ENCODE measurements at regions of chr3 and their contacts with region 1.

Region 1: DNA sequence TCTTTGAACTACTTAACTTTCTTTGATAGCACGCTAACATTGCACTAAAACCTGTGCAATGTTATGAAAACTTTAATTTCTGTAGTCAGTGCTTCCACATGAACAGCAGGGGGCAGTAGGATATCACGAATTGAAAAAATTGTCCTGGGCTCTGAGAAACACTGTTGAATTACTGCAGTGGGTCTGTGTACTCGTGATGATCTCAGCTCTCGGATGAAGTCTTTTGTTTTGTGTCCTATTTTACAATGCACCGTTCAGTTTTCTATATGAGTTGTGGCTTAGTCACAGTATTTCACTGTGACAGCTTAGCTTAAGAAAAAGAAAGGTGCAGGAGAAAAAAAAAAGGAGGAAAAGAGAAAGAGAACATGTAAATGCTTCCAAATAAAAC is 141.3 kb upstream of the CCDC54 start:
- DNase-seq: peak; percentile 50 to 69 (median 58)
- ATAC-seq: peak; percentile 81
- H3K4me3 ChIP-seq: peak overlapping the region; percentile 24; the same call in 1 of the 2 replicates
- H3K27ac ChIP-seq: no peak overlapping the region
- H3K4me1 ChIP-seq: peaks cover 0 to 7% of the 10 kb centered on the region in 2 experiments; a peak in 3 of 5 replicates
- H3K27me3 ChIP-seq: no peaks in the 10 kb centered on the region
- CTCF ChIP-seq: peak; percentile 57 to 83 (median 65); a peak in 5 of 6 replicates
- EP300 ChIP-seq: no peak
- POLR2A ChIP-seq: no peak
- RAD21 ChIP-seq: peak; percentile 85

Region 2: GRCh38 chr3:107184375-107184774 is 51.5 kb before region 1 on chr3:
- CTCF ChIA-PET with region 1: no interaction called
- POLR2A ChIA-PET with region 1: no interaction called
- in situ Hi-C with region 1: no loop called
- intact Hi-C with region 1: no loop called
- DNase-seq: no peak
- ATAC-seq: no peak
- H3K4me3 ChIP-seq: no peak overlapping the region
- H3K27ac ChIP-seq: no peak overlapping the region
- H3K4me1 ChIP-seq: no peaks in the 10 kb centered on the region
- H3K27me3 ChIP-seq: no peaks in the 10 kb centered on the region
- CTCF ChIP-seq: no peak
- EP300 ChIP-seq: no peak
- POLR2A ChIP-seq: no peak
- RAD21 ChIP-seq: no peak

Region 3: GRCh38 chr3:107421170-107421792 is 185.4 kb after region 1 on chr3:
- CTCF ChIA-PET with region 1: interaction called, 3 read pairs
- POLR2A ChIA-PET with region 1: interaction called, 4 read pairs
- in situ Hi-C with region 1: no loop called
- intact Hi-C with region 1: loop called (anchors 2 kb)
- DNase-seq: peak in 3 of 4 experiments; percentile 6 to 46 (median 17)
- ATAC-seq: peak; percentile 79
- H3K4me3 ChIP-seq: no peak overlapping the region
- H3K27ac ChIP-seq: no peak overlapping the region
- H3K4me1 ChIP-seq: no peaks in the 10 kb centered on the region
- H3K27me3 ChIP-seq: no peaks in the 10 kb centered on the region
- CTCF ChIP-seq: peak; percentile 36 to 68 (median 48); a peak in 5 of 6 replicates
- EP300 ChIP-seq: no peak
- POLR2A ChIP-seq: no peak
- RAD21 ChIP-seq: peak; percentile 54 to 65

Region 4: GRCh38 chr3:107676469-107677309 is 440.8 kb after region 1 on chr3:
- CTCF ChIA-PET with region 1: no interaction called
- POLR2A ChIA-PET with region 1: no interaction called
- in situ Hi-C with region 1: no loop called
- intact Hi-C with region 1: loop called (anchors 10 kb)
- DNase-seq: peak in 1 of 4 experiments; percentile 4
- ATAC-seq: no peak
- H3K4me3 ChIP-seq: no peak overlapping the region
- H3K27ac ChIP-seq: no peak overlapping the region
- H3K4me1 ChIP-seq: no peaks in the 10 kb centered on the region
- H3K27me3 ChIP-seq: no peaks in the 10 kb centered on the region
- CTCF ChIP-seq: peak in 2 of 3 experiments; percentile 34 to 52; a peak in 3 of 6 replicates
- EP300 ChIP-seq: no peak
- POLR2A ChIP-seq: no peak
- RAD21 ChIP-seq: peak; percentile 41 to 53; a peak in 3 of 4 replicates

Region 5: GRCh38 chr3:107846279-107846852 is 610.4 kb after region 1 on chr3:
- CTCF ChIA-PET with region 1: no interaction called
- POLR2A ChIA-PET with region 1: no interaction called
- in situ Hi-C with region 1: no loop called
- intact Hi-C with region 1: loop called (anchors 2 kb)
- DNase-seq: peak; percentile 25 to 65 (median 37)
- ATAC-seq: peak; percentile 89
- H3K4me3 ChIP-seq: no peak overlapping the region
- H3K27ac ChIP-seq: no peak overlapping the region
- H3K4me1 ChIP-seq: no peaks in the 10 kb centered on the region
- H3K27me3 ChIP-seq: peaks cover 2 to 4% of the 10 kb centered on the region in 2 experiments; a peak in 4 of 5 replicates
- CTCF ChIP-seq: peak; percentile 61 to 69 (median 64)
- EP300 ChIP-seq: no peak
- POLR2A ChIP-seq: no peak
- RAD21 ChIP-seq: peak; percentile 41 to 70

Region 6: GRCh38 chr3:108489771-108490170 is 1253.8 kb after region 1 on chr3:
- CTCF ChIA-PET with region 1: no interaction called
- POLR2A ChIA-PET with region 1: no interaction called
- in situ Hi-C with region 1: no loop called
- intact Hi-C with region 1: loop called (anchors 10 kb)
- DNase-seq: peak; percentile 25 to 43 (median 33)
- ATAC-seq: peak; percentile 73
- H3K4me3 ChIP-seq: no peak overlapping the region
- H3K27ac ChIP-seq: no peak overlapping the region
- H3K4me1 ChIP-seq: no peaks in the 10 kb centered on the region; a peak in 1 of 5 replicates
- H3K27me3 ChIP-seq: peaks cover 0 to 7% of the 10 kb centered on the region in 2 experiments; a peak in 2 of 5 replicates
- CTCF ChIP-seq: peak; percentile 59 to 69 (median 62); a peak in 5 of 6 replicates
- EP300 ChIP-seq: no peak
- POLR2A ChIP-seq: no peak
- RAD21 ChIP-seq: peak; percentile 76 to 83